SK-N-SH (cell line): ENCODE measurements at regions of chr2 and their contacts with region 1.

Region 1: GRCh38 chr2:231557571-231558237 is 27.5 kb upstream of the NMUR1 start:
- DNase-seq: peak; percentile 79
- H3K4me3 ChIP-seq: no peak overlapping the region
- H3K27ac ChIP-seq: no peak overlapping the region
- H3K4me1 ChIP-seq: no peaks in the 10 kb centered on the region
- H3K27me3 ChIP-seq: no peaks in the 10 kb centered on the region
- CTCF ChIP-seq: peak; percentile 64
- EP300 ChIP-seq: no peak
- RAD21 ChIP-seq: peak; percentile 85

Region 2: GRCh38 chr2:231475965-231476364 is 81.7 kb before region 1 on chr2:
- CTCF ChIA-PET with region 1: interaction called, 50 read pairs
- POLR2A ChIA-PET with region 1: no interaction called
- DNase-seq: no peak
- H3K4me3 ChIP-seq: no peak overlapping the region
- H3K27ac ChIP-seq: no peak overlapping the region
- H3K4me1 ChIP-seq: no peaks in the 10 kb centered on the region
- H3K27me3 ChIP-seq: no peaks in the 10 kb centered on the region
- CTCF ChIP-seq: no peak
- EP300 ChIP-seq: no peak
- RAD21 ChIP-seq: no peak

Region 3: GRCh38 chr2:231482806-231483391 is 74.8 kb before region 1 on chr2:
- CTCF ChIA-PET with region 1: interaction called, 50 read pairs
- POLR2A ChIA-PET with region 1: no interaction called
- DNase-seq: peak; percentile 96
- H3K4me3 ChIP-seq: no peak overlapping the region; a peak in 1 of 4 replicates
- H3K27ac ChIP-seq: no peak overlapping the region
- H3K4me1 ChIP-seq: no peaks in the 10 kb centered on the region; a peak in 1 of 4 replicates
- H3K27me3 ChIP-seq: no peaks in the 10 kb centered on the region
- CTCF ChIP-seq: peak; percentile 72
- EP300 ChIP-seq: no peak
- RAD21 ChIP-seq: peak; percentile 62

Region 4: DNA sequence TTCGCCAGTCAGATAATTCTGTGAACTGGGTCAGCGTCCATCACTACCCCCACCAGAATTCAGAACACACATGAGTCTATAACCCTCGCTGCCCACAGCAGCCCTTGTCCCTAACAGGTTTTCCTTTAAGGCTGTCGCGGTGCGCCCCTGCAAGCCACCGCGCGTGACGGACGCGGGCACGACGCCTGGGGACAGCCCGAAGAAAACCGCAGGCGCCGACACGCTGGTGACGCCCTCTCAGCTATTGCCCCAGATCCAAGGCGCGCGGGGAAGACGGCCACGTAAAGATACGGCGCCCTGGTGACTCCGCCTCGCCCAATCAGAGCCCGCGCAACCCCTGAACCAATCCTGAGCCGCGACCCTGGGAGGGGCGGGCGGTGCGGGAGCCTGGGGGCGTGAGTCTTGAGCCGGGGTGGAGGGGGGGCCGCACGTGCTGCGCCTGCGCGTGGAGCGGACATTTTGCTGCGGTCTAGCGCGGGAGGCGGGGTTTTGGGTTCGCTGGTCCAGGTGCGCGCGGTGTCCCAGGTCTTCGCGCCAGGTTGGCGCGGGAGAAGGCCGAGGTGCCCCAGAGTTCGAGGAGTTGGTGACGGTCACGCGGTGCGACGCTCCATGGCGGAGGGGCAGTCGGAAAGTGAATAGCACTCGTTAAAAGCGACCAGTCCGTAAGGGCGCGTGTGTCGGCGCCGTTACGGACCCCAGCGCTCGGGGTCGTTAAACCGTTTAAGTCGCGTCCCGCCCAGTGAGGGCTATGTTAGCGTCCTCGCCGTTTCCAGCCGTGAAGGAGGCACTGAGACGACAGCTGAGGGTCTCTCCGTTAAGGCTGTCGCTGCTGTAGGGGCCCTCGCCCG is 43.4 kb before region 1 on chr2:
- CTCF ChIA-PET with region 1: interaction called, 33 read pairs
- POLR2A ChIA-PET with region 1: no interaction called
- DNase-seq: peak; percentile 100
- H3K4me3 ChIP-seq: peak overlapping the region; percentile 86 to 89
- H3K27ac ChIP-seq: peak overlapping the region; percentile 58 to 86
- H3K4me1 ChIP-seq: peaks cover 0 to 5% of the 10 kb centered on the region in 2 experiments; a peak in 2 of 4 replicates
- H3K27me3 ChIP-seq: no peaks in the 10 kb centered on the region
- CTCF ChIP-seq: no peak
- EP300 ChIP-seq: no peak
- RAD21 ChIP-seq: no peak

Region 5: DNA sequence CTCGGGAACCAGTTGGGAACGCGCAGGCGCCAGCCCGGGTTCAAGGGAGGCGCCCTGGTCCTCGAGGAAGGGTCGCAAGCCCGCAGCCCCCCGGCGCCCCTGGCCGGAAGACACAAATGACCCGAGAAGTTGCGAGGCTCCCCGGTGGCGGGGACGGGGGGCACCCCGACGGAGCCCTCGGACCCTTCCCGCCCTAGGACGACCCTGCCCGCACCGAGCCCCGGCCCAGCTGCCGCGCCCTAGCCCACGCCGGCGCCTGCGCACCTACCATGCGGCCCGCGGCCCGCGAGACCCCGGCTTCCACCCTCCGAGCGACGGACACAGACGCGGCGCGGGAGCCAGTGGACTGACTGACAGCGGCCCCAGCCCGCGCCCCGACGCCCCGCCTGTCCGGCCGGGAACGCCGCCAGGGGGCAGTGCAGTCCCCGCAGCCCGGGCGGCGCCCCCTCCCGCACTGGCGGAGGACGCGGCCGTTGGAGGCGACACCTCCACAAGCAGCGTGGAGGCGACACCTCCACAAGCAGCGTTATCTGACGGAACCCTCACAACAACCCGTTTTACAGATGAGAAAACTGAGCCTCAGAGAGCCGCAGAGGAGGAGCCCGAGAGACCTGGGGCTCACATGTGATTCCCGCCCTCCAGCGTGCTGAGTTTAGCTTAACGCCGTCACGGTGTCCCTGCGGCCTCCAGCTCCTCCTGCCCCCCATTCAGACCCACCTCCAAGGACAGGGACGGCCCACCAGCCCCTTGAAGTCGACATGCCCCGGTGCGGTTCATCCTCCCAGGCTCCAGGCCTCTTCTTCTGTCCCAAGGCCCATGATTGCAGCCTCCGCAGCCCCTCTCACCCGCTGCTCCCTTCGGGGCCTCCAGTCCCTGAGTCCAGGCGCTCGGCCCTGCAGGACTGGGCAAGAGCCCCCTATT is 27.4 kb before region 1 on chr2 and contains the start of gene NMUR1:
- CTCF ChIA-PET with region 1: interaction called, 15 read pairs
- POLR2A ChIA-PET with region 1: interaction called, 3 read pairs
- DNase-seq: peak; percentile 93
- H3K4me3 ChIP-seq: peak within 1 kb of the TSS; percentile 39 to 44; a peak in 3 of 4 replicates
- H3K27ac ChIP-seq: no peak within 1 kb of the TSS
- H3K4me1 ChIP-seq: no peaks in the 10 kb centered on the region; a peak in 1 of 4 replicates
- H3K27me3 ChIP-seq: peaks cover 11% of the 10 kb centered on the region; the same call in 1 of the 2 replicates
- CTCF ChIP-seq: peak; percentile 73
- EP300 ChIP-seq: no peak
- RAD21 ChIP-seq: peak; percentile 34; the same call in 1 of the 2 replicates
- polyA plus RNA-seq, gene NMUR1: not detected in 2 replicates

Region 6: GRCh38 chr2:231545105-231545902 is 12.4 kb before region 1 on chr2:
- CTCF ChIA-PET with region 1: interaction called, 16 read pairs
- POLR2A ChIA-PET with region 1: no interaction called
- DNase-seq: no peak
- H3K4me3 ChIP-seq: no peak overlapping the region
- H3K27ac ChIP-seq: no peak overlapping the region; a peak in 1 of 4 replicates
- H3K4me1 ChIP-seq: peaks cover 0 to 6% of the 10 kb centered on the region in 2 experiments; a peak in 1 of 4 replicates
- H3K27me3 ChIP-seq: no peaks in the 10 kb centered on the region
- CTCF ChIP-seq: no peak
- EP300 ChIP-seq: no peak
- RAD21 ChIP-seq: no peak

Region 7: GRCh38 chr2:231583982-231584381 is 26.3 kb after region 1 on chr2:
- CTCF ChIA-PET with region 1: no interaction called
- POLR2A ChIA-PET with region 1: no interaction called
- DNase-seq: no peak
- H3K4me3 ChIP-seq: no peak overlapping the region
- H3K27ac ChIP-seq: no peak overlapping the region
- H3K4me1 ChIP-seq: no peaks in the 10 kb centered on the region
- H3K27me3 ChIP-seq: no peaks in the 10 kb centered on the region
- CTCF ChIP-seq: no peak
- EP300 ChIP-seq: no peak
- RAD21 ChIP-seq: no peak